Naive thymus-derived CD8-positive, alpha-beta T cell (primary cell): ENCODE measurements at regions of chr14 and their contacts with region 1.

Region 1: DNA sequence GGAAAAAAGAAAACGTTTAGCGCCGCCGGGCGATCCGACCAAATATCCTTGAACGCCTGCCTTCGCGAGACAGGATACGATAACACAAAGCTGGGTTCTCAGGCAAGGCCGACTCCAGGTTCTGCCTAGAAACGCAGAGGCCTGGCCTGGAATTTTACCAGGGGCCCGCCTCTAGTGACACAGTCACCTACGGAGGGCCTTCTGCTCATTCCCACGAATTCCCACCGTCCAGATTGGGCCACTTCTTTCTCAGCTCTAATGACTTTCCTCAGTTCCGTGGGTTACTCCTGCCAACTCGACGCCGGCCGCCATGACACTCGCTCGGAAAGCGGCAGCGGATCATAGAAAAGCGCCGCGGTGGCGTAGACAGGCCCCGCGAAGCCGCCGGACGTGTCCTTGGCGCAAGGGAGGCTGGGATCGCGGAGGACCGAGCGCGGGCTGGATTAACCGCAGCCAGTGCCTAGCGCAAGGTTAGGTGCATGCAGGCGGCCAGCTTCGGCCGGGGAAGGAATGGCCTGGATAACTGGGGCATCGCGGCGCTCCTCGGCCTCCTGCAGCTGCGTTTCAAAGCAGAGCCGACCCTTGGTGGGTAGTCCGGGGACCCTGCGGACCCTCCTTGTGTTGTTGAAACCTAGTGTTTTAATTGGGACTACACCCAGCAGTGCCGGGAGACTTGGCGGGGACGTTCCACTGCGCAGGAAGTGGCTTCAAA is at the start of gene TRIP11:
- DNase-seq: peak; percentile 82 to 99 (median 94)
- ATAC-seq: peak; percentile 89 to 90
- H3K4me3 Mint-ChIP-seq: peak within 1 kb of the TSS; percentile 95 to 99 (median 98)
- H3K27ac Mint-ChIP-seq: peak within 1 kb of the TSS in 9 of 10 donors; percentile 96 to 99 (median 98)
- H3K4me1 Mint-ChIP-seq: peaks cover 21 to 53% (median 40%) of the 10 kb centered on the region in 4 donors
- H3K27me3 Mint-ChIP-seq: no peaks in the 10 kb centered on the region
- polyA plus RNA-seq, gene TRIP11: 31.4 to 57.6 (median 50.8) TPM

Region 2: GRCh38 chr14:91510174-91511042 is 529.5 kb before region 1 on chr14 and contains the start of gene PPP4R3A:
- POLR2A ChIA-PET with region 1: interaction called, 11 read pairs
- DNase-seq: peak; percentile 87 to 96 (median 92)
- ATAC-seq: peak; percentile 81 to 83
- H3K4me3 Mint-ChIP-seq: peak within 1 kb of the TSS; percentile 94 to 100 (median 100)
- H3K27ac Mint-ChIP-seq: peak within 1 kb of the TSS; percentile 99 to 100 (median 100)
- H3K4me1 Mint-ChIP-seq: peaks cover 9 to 37% (median 32%) of the 10 kb centered on the region in 4 donors
- H3K27me3 Mint-ChIP-seq: peaks cover 0 to 3% (median 0%) of the 10 kb centered on the region in 5 donors
- polyA plus RNA-seq, gene PPP4R3A: 73.8 to 121 (median 75.3) TPM

Region 3: DNA sequence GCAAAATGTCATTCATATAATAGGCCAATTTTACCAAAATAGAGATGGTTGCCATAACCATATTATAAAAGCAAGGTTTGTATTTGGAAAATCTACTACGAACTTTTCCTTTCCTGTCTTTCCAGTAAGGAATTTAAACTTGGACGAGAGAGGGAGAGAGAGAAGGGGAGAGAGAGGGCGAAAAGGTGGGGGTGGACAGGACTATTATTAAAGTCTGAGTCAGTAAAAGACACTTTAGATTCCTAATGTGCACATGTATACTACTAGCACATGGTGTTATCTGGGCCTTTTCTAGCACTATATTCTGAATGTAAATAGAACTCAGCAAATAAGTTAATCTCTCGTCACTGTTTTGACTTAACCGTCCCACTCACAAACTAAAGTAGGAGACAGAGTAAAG is 62.0 kb before region 1 on chr14:
- POLR2A ChIA-PET with region 1: no interaction called
- DNase-seq: no peak
- ATAC-seq: no peak
- H3K4me3 Mint-ChIP-seq: no peak overlapping the region
- H3K27ac Mint-ChIP-seq: peak overlapping the region in 6 of 10 donors; percentile 11 to 82 (median 44)
- H3K4me1 Mint-ChIP-seq: peaks cover 3 to 11% (median 4%) of the 10 kb centered on the region in 4 donors
- H3K27me3 Mint-ChIP-seq: no peaks in the 10 kb centered on the region

Region 4: GRCh38 chr14:92106143-92106926 is 66.5 kb after region 1 on chr14 and contains the start of gene ATXN3:
- POLR2A ChIA-PET with region 1: interaction called, 41 read pairs
- DNase-seq: peak; percentile 92 to 98 (median 94)
- ATAC-seq: peak; percentile 91 to 94
- H3K4me3 Mint-ChIP-seq: peak within 1 kb of the TSS; percentile 90 to 100 (median 96)
- H3K27ac Mint-ChIP-seq: peak within 1 kb of the TSS; percentile 84 to 96 (median 94)
- H3K4me1 Mint-ChIP-seq: peaks cover 27 to 70% (median 67%) of the 10 kb centered on the region in 4 donors
- H3K27me3 Mint-ChIP-seq: no peaks in the 10 kb centered on the region
- polyA plus RNA-seq, gene ATXN3: 11.3 to 15.5 (median 14.3) TPM

Region 5: GRCh38 chr14:92121670-92122350 is 81.9 kb after region 1 on chr14 and contains the starts of genes CPSF2 and NDUFB1:
- POLR2A ChIA-PET with region 1: interaction called, 31 read pairs
- DNase-seq: peak; percentile 67 to 94 (median 84)
- ATAC-seq: peak; percentile 90
- H3K4me3 Mint-ChIP-seq: peak within 1 kb of the TSS; percentile 88 to 100 (median 98)
- H3K27ac Mint-ChIP-seq: peak within 1 kb of the TSS; percentile 97 to 100 (median 99)
- H3K4me1 Mint-ChIP-seq: peaks cover 20 to 68% (median 48%) of the 10 kb centered on the region in 4 donors
- H3K27me3 Mint-ChIP-seq: no peaks in the 10 kb centered on the region
- polyA plus RNA-seq, gene CPSF2: 28.3 to 30.7 (median 29.5) TPM
- polyA plus RNA-seq, gene NDUFB1: 331 to 412 (median 399) TPM

Region 6: GRCh38 chr14:92254786-92255185 is 214.9 kb after region 1 on chr14:
- POLR2A ChIA-PET with region 1: no interaction called
- DNase-seq: no peak
- ATAC-seq: no peak
- H3K4me3 Mint-ChIP-seq: peak overlapping the region in 4 of 10 donors; percentile 0 to 39 (median 10)
- H3K27ac Mint-ChIP-seq: peak overlapping the region in 1 of 10 donors; percentile 40
- H3K4me1 Mint-ChIP-seq: peaks cover 6 to 15% (median 9%) of the 10 kb centered on the region in 4 donors
- H3K27me3 Mint-ChIP-seq: peaks cover 22 to 60% (median 42%) of the 10 kb centered on the region in 5 donors